SK-N-SH (cell line): ENCODE measurements at regions of chr17 and their contacts with region 1.

Region 1: DNA sequence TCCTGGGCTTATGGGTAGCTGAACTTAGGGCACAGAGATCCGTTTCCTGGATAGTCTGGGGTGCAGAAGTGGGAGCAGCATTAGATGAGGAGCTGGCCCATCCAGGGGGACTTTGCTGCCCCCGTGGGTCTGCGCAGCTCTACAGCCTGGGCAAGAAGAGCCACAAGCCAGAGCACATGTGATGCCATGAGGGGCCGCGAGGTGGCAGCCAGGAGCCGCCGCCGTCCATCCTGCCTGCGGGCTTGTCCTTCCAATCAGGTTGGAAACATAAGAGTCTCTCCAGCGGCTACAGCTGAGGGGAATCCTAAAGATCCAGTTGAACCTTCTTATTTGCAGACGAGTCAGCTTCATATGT is 21.9 kb downstream of the C1QTNF1 start:
- DNase-seq: peak; percentile 93
- H3K4me3 ChIP-seq: no peak overlapping the region
- H3K27ac ChIP-seq: no peak overlapping the region
- H3K4me1 ChIP-seq: peaks cover 0 to 23% of the 10 kb centered on the region in 2 experiments; a peak in 2 of 4 replicates
- H3K27me3 ChIP-seq: no peaks in the 10 kb centered on the region
- CTCF ChIP-seq: peak; percentile 98
- EP300 ChIP-seq: no peak
- RAD21 ChIP-seq: peak; percentile 92

Region 2: DNA sequence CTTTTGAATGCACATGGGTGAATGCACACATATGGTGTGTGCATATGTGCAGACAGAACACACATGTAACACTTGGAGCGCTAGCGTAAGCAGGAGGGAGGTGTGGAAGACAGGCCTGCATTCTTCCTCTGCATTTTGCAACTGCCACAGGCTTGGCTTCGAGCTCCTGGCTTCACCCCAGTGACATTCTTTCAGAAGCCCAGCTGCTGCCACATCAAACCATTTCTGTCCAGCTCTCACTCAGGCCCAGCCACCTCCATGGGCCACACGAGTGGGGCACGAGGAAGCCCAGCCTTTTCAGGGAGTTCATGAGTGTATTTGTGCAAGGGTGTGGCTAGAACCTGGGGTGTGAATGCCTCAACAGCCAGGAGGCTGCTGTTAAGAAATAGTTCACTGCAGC is 84.9 kb before region 1 on chr17:
- CTCF ChIA-PET with region 1: no interaction called
- POLR2A ChIA-PET with region 1: no interaction called
- DNase-seq: no peak
- H3K4me3 ChIP-seq: no peak overlapping the region
- H3K27ac ChIP-seq: no peak overlapping the region
- H3K4me1 ChIP-seq: peaks cover 8% of the 10 kb centered on the region in 2 experiments; a peak in 2 of 4 replicates
- H3K27me3 ChIP-seq: no peaks in the 10 kb centered on the region
- CTCF ChIP-seq: no peak
- EP300 ChIP-seq: no peak
- RAD21 ChIP-seq: no peak

Region 3: DNA sequence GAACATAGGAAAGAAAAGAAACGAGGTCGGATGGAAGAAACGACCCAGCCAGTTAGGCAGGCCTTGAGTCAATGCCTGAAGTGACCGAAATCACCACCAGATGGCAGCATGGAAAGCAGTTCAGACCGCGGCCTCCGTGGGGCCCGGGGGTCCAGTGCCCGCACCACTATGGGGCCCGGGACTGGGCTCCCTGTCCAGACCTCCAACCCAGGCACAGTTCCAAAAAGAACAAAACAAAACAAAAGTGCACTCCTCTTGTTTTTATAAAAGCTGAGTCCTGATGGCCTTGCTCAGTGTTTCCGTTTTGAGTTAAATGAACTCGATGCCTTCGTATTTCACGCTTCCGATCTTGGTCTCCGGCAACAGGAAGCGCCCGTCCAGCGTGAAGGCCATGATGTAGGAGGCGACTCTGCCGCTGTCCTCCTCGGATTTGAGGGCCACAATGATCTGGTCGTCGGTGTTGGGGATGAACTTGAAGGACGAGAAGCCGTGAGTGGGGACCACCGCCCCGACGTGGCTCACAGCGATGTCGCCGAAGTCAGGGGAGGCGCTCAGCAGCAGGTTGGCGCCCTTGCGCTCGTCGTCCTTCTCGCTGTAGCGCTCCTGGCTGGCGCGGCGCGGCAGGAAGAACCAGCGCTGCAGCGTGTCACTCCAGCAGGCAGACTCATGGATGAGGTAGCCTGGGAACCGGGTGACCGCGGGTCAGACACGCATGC is 52.4 kb before region 1 on chr17:
- CTCF ChIA-PET with region 1: interaction called, 36 read pairs
- POLR2A ChIA-PET with region 1: no interaction called
- DNase-seq: peak; percentile 94
- H3K4me3 ChIP-seq: no peak overlapping the region; a peak in 1 of 4 replicates
- H3K27ac ChIP-seq: no peak overlapping the region; a peak in 1 of 4 replicates
- H3K4me1 ChIP-seq: peaks cover 0 to 10% of the 10 kb centered on the region in 2 experiments; a peak in 1 of 4 replicates
- H3K27me3 ChIP-seq: no peaks in the 10 kb centered on the region
- CTCF ChIP-seq: peak; percentile 98
- EP300 ChIP-seq: no peak
- RAD21 ChIP-seq: peak; percentile 71

Region 4: GRCh38 chr17:79012563-79013134 is 33.2 kb before region 1 on chr17:
- CTCF ChIA-PET with region 1: interaction called, 405 read pairs
- POLR2A ChIA-PET with region 1: no interaction called
- DNase-seq: no peak
- H3K4me3 ChIP-seq: no peak overlapping the region
- H3K27ac ChIP-seq: no peak overlapping the region
- H3K4me1 ChIP-seq: peaks cover 18 to 22% of the 10 kb centered on the region in 2 experiments; a peak in 3 of 4 replicates
- H3K27me3 ChIP-seq: no peaks in the 10 kb centered on the region
- CTCF ChIP-seq: no peak
- EP300 ChIP-seq: no peak
- RAD21 ChIP-seq: no peak

Region 5: DNA sequence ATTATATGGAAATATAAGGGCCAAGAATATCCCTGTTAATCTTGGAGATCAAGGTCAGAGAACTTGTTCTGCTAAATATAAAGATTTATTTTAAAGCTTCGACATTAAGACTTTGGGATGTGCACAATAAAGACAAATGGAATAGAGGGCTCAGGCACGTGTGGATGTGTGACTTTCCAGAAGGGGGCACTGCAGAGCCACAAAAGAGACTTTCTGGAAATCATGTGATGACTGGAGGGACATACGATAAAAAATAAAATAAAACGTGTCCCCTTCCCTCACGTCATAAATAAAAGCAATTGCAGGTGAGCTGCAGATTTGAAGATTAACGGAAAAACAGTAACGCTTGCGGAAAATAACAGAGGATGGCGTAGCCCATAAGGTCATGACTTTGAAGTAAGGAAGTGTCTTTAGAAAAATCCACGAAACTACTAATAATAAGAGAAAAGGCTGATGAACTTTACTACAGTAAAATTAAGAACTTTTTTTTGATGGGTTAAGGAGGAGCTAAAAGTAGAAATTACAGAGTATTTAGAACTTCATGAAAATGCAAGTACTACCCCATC is 19.4 kb after region 1 on chr17:
- CTCF ChIA-PET with region 1: interaction called, 18 read pairs
- POLR2A ChIA-PET with region 1: interaction called, 7 read pairs
- DNase-seq: no peak
- H3K4me3 ChIP-seq: no peak overlapping the region
- H3K27ac ChIP-seq: no peak overlapping the region
- H3K4me1 ChIP-seq: no peaks in the 10 kb centered on the region
- H3K27me3 ChIP-seq: no peaks in the 10 kb centered on the region; the same call in 1 of the 2 replicates
- CTCF ChIP-seq: peak; percentile 68
- EP300 ChIP-seq: no peak
- RAD21 ChIP-seq: peak; percentile 65

Region 6: GRCh38 chr17:79109570-79109969 is 63.8 kb after region 1 on chr17:
- CTCF ChIA-PET with region 1: interaction called, 17 read pairs
- POLR2A ChIA-PET with region 1: no interaction called
- DNase-seq: peak; percentile 79
- H3K4me3 ChIP-seq: no peak overlapping the region
- H3K27ac ChIP-seq: no peak overlapping the region
- H3K4me1 ChIP-seq: peaks cover 0 to 15% of the 10 kb centered on the region in 2 experiments; a peak in 1 of 4 replicates
- H3K27me3 ChIP-seq: peaks cover 17% of the 10 kb centered on the region; the same call in 1 of the 2 replicates
- CTCF ChIP-seq: peak; percentile 48
- EP300 ChIP-seq: no peak
- RAD21 ChIP-seq: peak; percentile 51

Region 7: GRCh38 chr17:79174905-79175856 is 129.4 kb after region 1 on chr17:
- CTCF ChIA-PET with region 1: interaction called, 12 read pairs
- POLR2A ChIA-PET with region 1: no interaction called
- DNase-seq: no peak
- H3K4me3 ChIP-seq: no peak overlapping the region
- H3K27ac ChIP-seq: no peak overlapping the region
- H3K4me1 ChIP-seq: peaks cover 0 to 6% of the 10 kb centered on the region in 2 experiments; a peak in 1 of 4 replicates
- H3K27me3 ChIP-seq: peaks cover 41% of the 10 kb centered on the region
- CTCF ChIP-seq: no peak
- EP300 ChIP-seq: no peak
- RAD21 ChIP-seq: no peak

Region 8: GRCh38 chr17:79231766-79232287 is 186.0 kb after region 1 on chr17:
- CTCF ChIA-PET with region 1: no interaction called
- POLR2A ChIA-PET with region 1: no interaction called
- DNase-seq: no peak
- H3K4me3 ChIP-seq: no peak overlapping the region
- H3K27ac ChIP-seq: no peak overlapping the region
- H3K4me1 ChIP-seq: peaks cover 0 to 5% of the 10 kb centered on the region in 2 experiments; a peak in 1 of 4 replicates
- H3K27me3 ChIP-seq: peaks cover 5% of the 10 kb centered on the region; the same call in 1 of the 2 replicates
- CTCF ChIP-seq: no peak
- EP300 ChIP-seq: no peak
- RAD21 ChIP-seq: no peak

Region 9: GRCh38 chr17:79400989-79401703 is 355.3 kb after region 1 on chr17:
- CTCF ChIA-PET with region 1: interaction called, 17 read pairs
- POLR2A ChIA-PET with region 1: no interaction called
- DNase-seq: peak; percentile 94
- H3K4me3 ChIP-seq: peak overlapping the region; percentile 34 to 55
- H3K27ac ChIP-seq: no peak overlapping the region
- H3K4me1 ChIP-seq: peaks cover 0 to 8% of the 10 kb centered on the region in 2 experiments; a peak in 1 of 4 replicates
- H3K27me3 ChIP-seq: peaks cover 55% of the 10 kb centered on the region
- CTCF ChIP-seq: peak; percentile 97
- EP300 ChIP-seq: no peak
- RAD21 ChIP-seq: peak; percentile 67